Heart left ventricle (tissue), 16 donors: ENCODE measurements at regions of chr10 and their contacts with region 1.

Region 1: DNA sequence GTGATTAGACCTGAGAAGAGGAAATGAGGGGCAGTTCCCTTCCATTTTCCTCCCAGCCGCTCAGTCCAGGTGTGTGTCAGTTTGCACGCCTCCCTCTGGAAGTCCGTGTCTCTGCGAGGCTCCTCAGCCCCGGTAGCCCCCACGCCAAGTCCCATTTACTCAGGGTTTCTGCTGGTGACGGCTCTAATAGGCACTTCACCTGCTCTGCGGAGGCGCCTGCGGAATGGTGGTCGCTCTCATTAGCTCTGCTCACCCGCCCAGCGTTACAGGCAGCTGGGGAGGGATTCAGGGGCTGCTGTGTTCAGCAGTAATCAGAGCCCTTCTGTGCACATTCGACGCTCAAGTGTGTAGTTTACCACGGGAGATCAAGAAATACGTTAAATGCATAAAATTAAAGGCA is 179.9 kb downstream of the MGMT start:
- DNase-seq: no peak
- ATAC-seq: no peak
- H3K4me3 ChIP-seq: no peak overlapping the region
- H3K27ac ChIP-seq: no peak overlapping the region
- H3K4me1 ChIP-seq: no peaks in the 10 kb centered on the region
- H3K27me3 ChIP-seq: no peaks in the 10 kb centered on the region
- CTCF ChIP-seq: no peak
- POLR2A ChIP-seq: no peak

Region 2: GRCh38 chr10:129689671-129690071 is 42.7 kb after region 1 on chr10:
- intact Hi-C with region 1: loop called in 1 of 10 experiments (anchors 5 kb)
- DNase-seq: no peak
- ATAC-seq: peak in 1 of 4 donors; percentile 33
- H3K4me3 ChIP-seq: no peak overlapping the region
- H3K27ac ChIP-seq: peak overlapping the region in 1 of 12 donors; percentile 11
- H3K4me1 ChIP-seq: peaks cover 0 to 23% (median 7%) of the 10 kb centered on the region in 12 donors
- H3K27me3 ChIP-seq: no peaks in the 10 kb centered on the region
- CTCF ChIP-seq: no peak
- POLR2A ChIP-seq: no peak